ENCODE measurements at regions of chr18 and their contacts with region 1.

Region 1: DNA sequence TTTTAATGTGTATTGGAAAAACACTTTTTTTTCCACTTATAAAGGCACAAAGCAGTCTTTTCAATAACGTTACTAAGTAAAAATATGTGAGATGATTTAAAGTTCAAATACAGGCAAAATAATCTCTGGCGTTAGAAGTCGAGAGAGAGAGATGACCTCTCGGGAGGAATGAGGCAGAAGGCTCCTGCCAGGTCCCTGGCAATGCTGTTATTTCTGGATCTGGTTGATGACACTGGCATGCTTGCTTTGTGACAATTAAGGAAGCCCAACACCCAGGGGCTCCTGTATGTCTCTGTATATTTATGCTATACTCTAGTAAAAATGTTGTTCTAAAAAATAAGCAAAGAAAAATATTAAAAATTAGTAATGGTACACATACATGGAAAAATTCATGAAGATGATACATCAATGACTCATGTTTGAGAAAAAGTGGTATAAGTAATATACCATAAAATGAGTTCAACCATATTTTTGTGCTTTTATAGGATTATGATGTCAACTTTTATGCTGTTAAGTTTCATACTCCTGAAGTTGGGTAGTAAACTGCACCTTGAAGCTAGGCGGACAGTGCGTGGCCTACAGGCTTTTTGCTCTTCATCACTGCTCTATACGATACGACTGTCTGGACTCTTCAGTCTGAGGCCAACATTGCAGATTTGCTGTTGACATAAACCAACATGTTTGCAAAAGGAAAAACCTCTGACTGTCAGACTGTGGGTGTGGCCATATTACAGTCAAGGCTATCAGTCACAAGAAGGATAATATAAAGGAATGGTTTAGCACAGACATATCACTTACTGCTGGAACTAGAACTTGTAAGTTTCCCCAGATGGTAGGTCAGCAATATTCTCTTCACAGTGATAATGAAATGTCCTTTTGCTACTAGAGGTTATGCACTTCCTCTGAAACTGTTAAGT is 19.8 kb downstream of the VPS4B start:
- DNase-seq: peak; percentile 48
- ATAC-seq: peak; percentile 95
- H3K4me3 ChIP-seq: no peak overlapping the region
- H3K27ac ChIP-seq: peak overlapping the region; percentile 36
- H3K4me1 ChIP-seq: peaks cover 16% of the 10 kb centered on the region
- H3K27me3 ChIP-seq: no peaks in the 10 kb centered on the region
- CTCF ChIP-seq: no peak

Region 2: GRCh38 chr18:63346031-63346430 is 56.5 kb before region 1 on chr18:
- CTCF ChIA-PET with region 1: no interaction called
- POLR2A ChIA-PET with region 1: no interaction called
- intact Hi-C with region 1: no loop called
- DNase-seq: no peak
- ATAC-seq: no peak
- H3K4me3 ChIP-seq: no peak overlapping the region
- H3K27ac ChIP-seq: no peak overlapping the region
- H3K4me1 ChIP-seq: no peaks in the 10 kb centered on the region
- H3K27me3 ChIP-seq: no peaks in the 10 kb centered on the region
- CTCF ChIP-seq: no peak

Region 3: DNA sequence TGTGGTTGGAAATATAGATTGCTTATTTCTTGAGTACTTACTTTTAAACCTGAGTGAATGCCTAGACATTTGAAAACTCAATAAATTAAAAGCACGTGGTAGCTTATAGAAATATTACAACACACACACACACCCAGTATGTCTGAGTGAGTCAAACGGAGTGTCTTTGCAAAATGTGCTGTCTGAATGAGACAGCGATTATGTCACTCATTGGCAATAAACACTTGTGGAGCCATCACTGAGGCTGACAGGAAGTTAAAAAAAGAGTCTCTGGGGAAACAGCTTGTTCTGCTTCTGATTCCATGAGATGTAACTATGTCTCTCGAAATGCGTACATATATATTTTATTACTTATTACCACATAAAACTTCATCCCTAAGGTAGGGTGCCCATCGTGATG is 42.1 kb after region 1 on chr18:
- CTCF ChIA-PET with region 1: no interaction called
- POLR2A ChIA-PET with region 1: no interaction called
- intact Hi-C with region 1: loop called (anchors 5 kb)
- DNase-seq: peak; percentile 83
- ATAC-seq: peak; percentile 60
- H3K4me3 ChIP-seq: no peak overlapping the region
- H3K27ac ChIP-seq: peak overlapping the region; percentile 81
- H3K4me1 ChIP-seq: peaks cover 29% of the 10 kb centered on the region
- H3K27me3 ChIP-seq: no peaks in the 10 kb centered on the region
- CTCF ChIP-seq: no peak

Measured in PC-3 (cell line).